Uterus (tissue), 4 donors: ENCODE measurements at regions of chr11 and their contacts with region 1.

Region 1: GRCh38 chr11:68903288-68904247 is at the starts of genes IGHMBP2 and MRPL21:
- DNase-seq: peak; percentile 77 to 85
- H3K4me3 ChIP-seq: peak within 1 kb of the TSS; percentile 63 to 79
- H3K27ac ChIP-seq: peak within 1 kb of the TSS; percentile 81 to 87
- H3K4me1 ChIP-seq: peaks cover 0 to 13% of the 10 kb centered on the region in 2 donors
- H3K27me3 ChIP-seq: no peaks in the 10 kb centered on the region
- CTCF ChIP-seq: peak in 1 of 4 experiments; percentile 32
- POLR2A ChIP-seq: peak; percentile 27 to 81
- total RNA-seq, gene IGHMBP2: 0.88 to 38.5 (median 19.9) TPM
- total RNA-seq, gene MRPL21: 29.2 to 52.7 (median 36.9) TPM

Region 2: DNA sequence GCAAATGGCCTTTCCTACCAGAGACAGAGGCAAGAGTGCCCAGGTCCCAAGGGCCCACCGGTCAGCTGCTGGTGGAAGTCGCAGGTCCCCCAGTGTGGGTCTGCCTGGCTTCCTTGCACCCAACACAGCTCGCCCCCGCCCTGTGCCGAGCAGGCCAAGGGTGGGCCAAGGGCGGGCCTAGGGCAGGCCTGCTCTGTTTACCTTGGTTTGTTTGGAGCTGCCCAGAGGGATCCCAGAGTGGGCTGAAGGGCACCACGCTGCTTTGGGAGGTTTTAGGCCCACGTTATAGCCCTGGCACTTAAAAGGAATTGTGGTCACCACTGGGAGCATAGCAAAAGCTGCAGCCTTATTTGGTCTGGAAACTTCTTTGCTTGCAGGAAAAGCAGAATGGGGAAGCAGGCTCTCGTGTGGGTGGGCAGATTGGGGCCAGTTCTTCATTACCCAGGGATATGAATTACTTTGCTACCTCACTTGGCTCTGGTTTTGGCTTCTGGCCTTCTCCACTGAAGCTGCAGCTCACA is 39.2 kb after region 1 on chr11:
- intact Hi-C with region 1: no loop called
- DNase-seq: peak; percentile 64 to 77
- H3K4me3 ChIP-seq: no peak overlapping the region
- H3K27ac ChIP-seq: peak overlapping the region; percentile 92 to 96
- H3K4me1 ChIP-seq: peaks cover 0 to 20% of the 10 kb centered on the region in 2 donors
- H3K27me3 ChIP-seq: no peaks in the 10 kb centered on the region
- CTCF ChIP-seq: no peak
- POLR2A ChIP-seq: peak in 1 of 2 donors; percentile 23

Region 3: DNA sequence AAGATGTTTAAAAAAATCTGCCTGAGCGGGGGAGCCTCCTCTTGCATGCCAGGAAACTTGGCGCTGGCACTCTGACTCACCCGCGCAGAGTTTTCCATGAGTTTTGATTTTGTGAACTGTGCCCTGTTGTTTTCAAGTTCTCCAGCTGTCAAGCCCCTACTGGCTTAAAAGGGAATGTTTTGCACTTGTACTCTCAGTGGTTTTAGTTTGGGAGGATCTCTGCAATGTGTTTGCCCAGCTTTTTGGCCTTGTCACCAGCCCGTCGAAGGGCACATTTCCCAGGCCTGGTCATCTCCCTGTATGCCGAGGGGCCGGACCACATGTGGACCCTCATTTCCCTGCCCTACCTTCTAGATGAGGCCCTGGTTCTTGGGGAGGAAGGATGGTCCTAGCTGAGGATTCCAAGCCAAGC is 97.3 kb after region 1 on chr11:
- intact Hi-C with region 1: loop called (anchors 2 kb)
- DNase-seq: peak; percentile 75 to 87
- H3K4me3 ChIP-seq: no peak overlapping the region
- H3K27ac ChIP-seq: peak overlapping the region; percentile 84 to 99
- H3K4me1 ChIP-seq: peaks cover 20 to 27% of the 10 kb centered on the region in 2 donors
- H3K27me3 ChIP-seq: no peaks in the 10 kb centered on the region
- CTCF ChIP-seq: peak; percentile 35 to 84 (median 66)
- POLR2A ChIP-seq: peak in 1 of 2 donors; percentile 16

Region 4: GRCh38 chr11:69088676-69089146 is 185.1 kb after region 1 on chr11:
- intact Hi-C with region 1: loop called (anchors 5 kb)
- DNase-seq: peak; percentile 79 to 86
- H3K4me3 ChIP-seq: no peak overlapping the region
- H3K27ac ChIP-seq: peak overlapping the region in 1 of 2 donors; percentile 39
- H3K4me1 ChIP-seq: peaks cover 0 to 7% of the 10 kb centered on the region in 2 donors
- H3K27me3 ChIP-seq: no peaks in the 10 kb centered on the region
- CTCF ChIP-seq: peak; percentile 75 to 87 (median 79)
- POLR2A ChIP-seq: no peak

Region 5: GRCh38 chr11:69662017-69662698 is 758.6 kb after region 1 on chr11:
- intact Hi-C with region 1: loop called (anchors 10 kb)
- DNase-seq: no peak
- H3K4me3 ChIP-seq: no peak overlapping the region
- H3K27ac ChIP-seq: no peak overlapping the region
- H3K4me1 ChIP-seq: no peaks in the 10 kb centered on the region
- H3K27me3 ChIP-seq: no peaks in the 10 kb centered on the region
- CTCF ChIP-seq: no peak
- POLR2A ChIP-seq: no peak